Cardiac septum (tissue), 1 donor: ENCODE measurements at regions of chr4 and their contacts with region 1.

Region 1: GRCh38 chr4:64341711-64342110 is 67.5 kb downstream of the TECRL start:
- DNase-seq: peak; percentile 84

Region 2: DNA sequence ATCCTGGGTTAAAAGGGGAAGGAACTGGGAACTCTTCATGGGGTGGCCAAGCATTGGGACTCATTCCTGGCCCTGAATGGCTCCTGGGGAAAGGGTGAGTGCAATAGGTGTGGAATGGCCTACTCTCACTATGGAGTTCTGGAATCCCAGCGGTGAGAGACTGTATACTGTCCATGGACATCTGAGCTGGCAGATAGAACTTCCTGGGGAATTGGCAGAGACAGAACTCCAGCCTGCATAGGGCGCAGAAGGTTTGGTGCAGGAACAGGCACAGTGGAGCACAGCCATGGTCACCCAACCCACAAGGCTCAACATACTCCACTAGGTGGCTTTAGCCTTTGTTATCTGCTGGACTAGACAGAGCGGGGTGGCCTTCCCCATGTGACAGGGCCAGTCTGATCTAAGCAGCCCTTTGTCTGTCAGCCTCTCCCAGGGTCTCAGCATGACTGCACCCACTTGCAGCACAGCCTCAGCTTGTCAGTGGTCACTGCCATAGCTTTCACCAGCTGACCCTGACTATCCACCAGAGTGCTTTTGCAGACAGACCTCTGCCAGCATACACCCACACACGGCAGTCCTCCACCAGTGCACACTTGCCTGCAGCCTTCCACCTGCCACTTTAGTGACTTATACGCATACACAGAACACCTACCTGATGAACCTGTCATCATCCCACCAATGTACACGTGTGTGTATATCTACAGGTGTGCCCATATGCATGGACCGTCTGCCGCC is 19.1 kb after region 1 on chr4:
- intact Hi-C with region 1: loop called (anchors 2 kb)
- DNase-seq: no peak

Region 3: DNA sequence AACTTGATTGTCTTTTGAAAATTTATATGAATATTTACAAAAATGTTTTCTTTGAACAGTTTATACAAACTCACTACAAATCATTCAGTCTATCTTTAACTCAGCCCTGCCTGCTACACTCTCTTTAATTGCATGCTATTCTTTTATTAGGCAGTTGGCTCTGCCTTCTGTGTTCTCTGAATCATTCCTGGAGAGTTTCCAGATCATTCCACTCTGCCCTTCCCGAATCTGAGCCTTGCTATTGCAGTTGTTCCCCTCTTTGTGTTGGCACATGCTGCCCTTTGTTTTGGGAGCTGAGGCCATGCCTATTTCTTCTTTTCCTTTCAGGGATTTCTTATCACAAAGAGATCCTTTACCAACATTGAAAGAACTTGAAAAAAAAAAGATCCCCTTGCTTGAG is 76.3 kb after region 1 on chr4:
- intact Hi-C with region 1: loop called (anchors 5 kb)
- DNase-seq: no peak

Region 4: GRCh38 chr4:64564126-64564525 is 222.4 kb after region 1 on chr4:
- intact Hi-C with region 1: no loop called
- DNase-seq: no peak